HAP-1 (cell line): ENCODE measurements at regions of chr12 and their contacts with region 1.

Region 1: GRCh38 chr12:53427905-53428594 is 4.4 kb downstream of the AMHR2 start:
- DNase-seq: no peak
- H3K4me3 ChIP-seq: no peak overlapping the region
- H3K4me1 ChIP-seq: no peaks in the 10 kb centered on the region; the same call in 1 of the 2 replicates
- H3K27me3 ChIP-seq: no peaks in the 10 kb centered on the region

Region 2: DNA sequence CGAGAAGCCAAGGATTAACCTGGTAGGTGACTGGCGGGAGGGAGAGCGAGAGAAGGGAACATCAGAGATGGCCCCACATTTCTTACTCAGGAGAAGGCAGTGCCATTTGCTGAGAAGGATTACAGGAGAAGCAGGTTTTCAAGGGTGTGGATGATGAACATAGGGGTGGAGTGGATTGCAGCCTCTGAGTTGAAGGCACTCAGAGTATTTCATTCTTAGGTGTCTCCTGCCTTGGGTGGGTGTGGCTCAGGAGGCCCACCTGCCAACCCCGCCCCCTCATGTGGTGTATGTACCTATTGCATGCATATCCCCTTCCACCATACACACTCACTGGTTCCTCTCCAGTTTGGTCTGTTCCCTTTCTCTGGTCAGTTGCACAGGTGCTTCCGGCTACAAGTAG is 153.6 kb before region 1 on chr12:
- in situ Hi-C with region 1: no loop called
- DNase-seq: no peak
- H3K4me3 ChIP-seq: no peak overlapping the region
- H3K4me1 ChIP-seq: peaks cover 3% of the 10 kb centered on the region
- H3K27me3 ChIP-seq: no peaks in the 10 kb centered on the region

Region 3: GRCh38 chr12:53352331-53353256 is 75.5 kb before region 1 on chr12:
- in situ Hi-C with region 1: loop called (anchors 5 kb)
- DNase-seq: peak; percentile 87 to 91
- H3K4me3 ChIP-seq: no peak overlapping the region
- H3K4me1 ChIP-seq: no peaks in the 10 kb centered on the region; the same call in 1 of the 2 replicates
- H3K27me3 ChIP-seq: no peaks in the 10 kb centered on the region